ENCODE measurements at regions of chr4 and their contacts with region 1.

Region 1: GRCh38 chr4:75895744-75896314 is 6.4 kb downstream of the PPEF2 start:
- DNase-seq: peak; percentile 52
- ATAC-seq: peak; percentile 79
- H3K4me3 ChIP-seq: no peak overlapping the region
- H3K27ac ChIP-seq: no peak overlapping the region
- H3K4me1 ChIP-seq: peaks cover 7% of the 10 kb centered on the region; the same call in 1 of the 2 replicates
- H3K27me3 ChIP-seq: no peaks in the 10 kb centered on the region
- CTCF ChIP-seq: peak; percentile 71
- EP300 ChIP-seq: no peak
- POLR2A ChIP-seq: no peak
- RAD21 ChIP-seq: peak; percentile 30; the same call in 1 of the 2 replicates

Region 2: DNA sequence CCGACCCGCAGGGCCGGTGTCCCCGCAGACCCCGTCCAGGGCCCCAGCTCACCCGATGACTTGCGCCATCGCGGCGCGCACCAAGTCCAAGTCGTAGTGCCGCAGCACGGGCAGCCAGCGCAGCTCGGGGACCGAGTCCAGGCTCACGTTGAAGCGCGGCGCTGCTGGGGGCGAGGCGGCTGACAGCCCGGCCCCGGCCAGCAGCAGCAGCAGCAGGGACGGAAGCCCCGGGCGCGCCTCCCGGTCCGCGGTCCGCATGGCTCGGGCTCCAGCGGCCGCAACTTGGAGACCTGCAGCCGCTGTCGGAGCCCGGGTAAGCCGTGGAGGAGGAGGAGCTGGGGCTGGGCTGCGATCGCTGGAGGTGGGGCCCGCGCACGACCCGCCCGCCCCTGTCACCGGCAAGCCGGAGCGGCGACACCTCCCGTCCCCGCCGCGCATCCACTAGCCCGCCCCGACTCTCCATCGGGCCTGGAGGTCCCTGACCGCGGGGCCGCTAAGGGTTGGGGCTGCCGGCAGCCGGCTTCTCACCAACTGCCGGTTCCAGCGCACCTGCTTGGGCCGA is 44.9 kb after region 1 on chr4 and contains the start of gene NAAA:
- CTCF ChIA-PET with region 1: interaction called, 5 read pairs
- POLR2A ChIA-PET with region 1: no interaction called
- in situ Hi-C with region 1: no loop called
- intact Hi-C with region 1: loop called (anchors 1 kb)
- DNase-seq: peak; percentile 62
- ATAC-seq: peak; percentile 90
- H3K4me3 ChIP-seq: peak within 1 kb of the TSS; percentile 64 to 89 (median 67)
- H3K27ac ChIP-seq: peak within 1 kb of the TSS; percentile 82
- H3K4me1 ChIP-seq: peaks cover 20% of the 10 kb centered on the region
- H3K27me3 ChIP-seq: no peaks in the 10 kb centered on the region
- CTCF ChIP-seq: peak; percentile 74
- EP300 ChIP-seq: no peak
- POLR2A ChIP-seq: peak in 1 of 2 experiments; percentile 72; a peak in 3 of 4 replicates
- RAD21 ChIP-seq: peak; percentile 15
- total RNA-seq, gene NAAA: 11.7 and 24.6 TPM in 2 replicates

Region 3: DNA sequence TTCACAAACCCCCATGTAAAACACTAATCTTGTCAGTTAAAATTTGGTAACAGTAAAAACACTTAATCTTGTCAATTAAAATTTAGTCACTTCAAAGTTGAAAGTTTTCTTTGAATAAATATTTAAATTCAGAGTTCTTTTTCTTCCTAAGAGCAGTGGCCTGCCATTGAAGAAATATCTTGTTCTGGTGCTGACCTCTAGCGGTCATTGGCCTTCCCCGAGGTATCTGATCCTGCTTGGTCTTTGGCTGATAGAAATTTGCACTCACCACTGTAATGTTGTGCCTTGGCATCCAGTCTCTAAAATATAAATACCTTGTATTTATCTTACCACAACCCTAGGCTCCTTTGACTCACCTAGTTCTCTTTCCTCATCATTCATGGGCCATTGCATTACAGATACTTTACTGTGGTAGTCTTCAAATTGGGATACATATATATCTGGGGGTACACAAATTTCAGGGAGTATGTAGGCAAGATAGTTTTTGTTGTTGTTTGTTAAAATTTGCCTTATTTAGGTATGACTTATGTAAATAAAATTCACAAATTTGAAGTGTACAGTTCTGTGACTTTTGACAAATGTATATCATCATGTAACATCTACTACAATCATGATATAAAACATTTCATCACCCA is 171.9 kb after region 1 on chr4:
- CTCF ChIA-PET with region 1: interaction called, 3 read pairs
- POLR2A ChIA-PET with region 1: no interaction called
- in situ Hi-C with region 1: loop called (anchors 10 kb)
- intact Hi-C with region 1: no loop called
- DNase-seq: peak; percentile 60
- ATAC-seq: peak; percentile 92
- H3K4me3 ChIP-seq: no peak overlapping the region
- H3K27ac ChIP-seq: no peak overlapping the region
- H3K4me1 ChIP-seq: no peaks in the 10 kb centered on the region
- H3K27me3 ChIP-seq: no peaks in the 10 kb centered on the region
- CTCF ChIP-seq: peak; percentile 80
- EP300 ChIP-seq: no peak
- POLR2A ChIP-seq: no peak
- RAD21 ChIP-seq: peak; percentile 66